Ascending aorta (tissue), 2 donors: ENCODE measurements at regions of chr12 and their contacts with region 1.

Region 1: GRCh38 chr12:88725592-88726143 is 145.4 kb upstream of the KITLG start:
- DNase-seq: no peak
- H3K4me3 ChIP-seq: no peak overlapping the region
- H3K27ac ChIP-seq: no peak overlapping the region
- H3K4me1 ChIP-seq: no peaks in the 10 kb centered on the region
- H3K27me3 ChIP-seq: no peaks in the 10 kb centered on the region
- CTCF ChIP-seq: no peak

Region 2: DNA sequence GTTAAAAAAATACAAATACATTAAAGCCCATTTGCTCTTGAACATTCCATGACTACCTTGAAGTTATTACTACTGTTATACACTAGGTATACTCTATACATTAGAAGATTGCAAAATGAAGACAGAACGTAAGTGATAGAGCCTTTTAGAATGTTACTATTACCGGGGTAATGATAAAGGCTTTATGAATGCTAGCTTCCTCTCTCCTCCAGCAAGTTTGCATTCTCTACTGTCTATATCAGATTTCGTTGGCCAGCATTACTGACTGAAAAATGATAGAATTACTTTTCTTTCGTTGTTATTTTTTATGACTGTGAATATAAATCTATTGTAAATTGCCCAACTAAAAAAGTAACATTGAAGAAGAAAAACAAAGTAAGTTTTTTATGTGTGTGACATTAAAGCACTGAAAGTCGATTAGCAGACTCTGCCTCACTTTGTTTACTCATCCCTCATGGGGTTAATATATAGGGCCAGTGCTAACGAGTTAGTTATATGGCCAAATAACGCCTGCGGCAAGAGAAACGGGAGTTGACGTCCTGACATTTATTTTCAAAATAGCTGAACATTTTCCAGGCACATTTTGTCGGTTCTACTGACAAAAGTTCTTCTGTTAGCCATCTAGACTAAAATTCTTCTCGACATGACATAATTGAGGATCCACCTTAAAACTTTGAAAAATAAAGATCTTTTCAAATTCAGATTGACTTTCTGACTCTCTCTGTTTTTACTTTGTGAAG is 18.4 kb after region 1 on chr12:
- intact Hi-C with region 1: no loop called
- DNase-seq: no peak
- H3K4me3 ChIP-seq: no peak overlapping the region
- H3K27ac ChIP-seq: no peak overlapping the region
- H3K4me1 ChIP-seq: no peaks in the 10 kb centered on the region
- H3K27me3 ChIP-seq: no peaks in the 10 kb centered on the region
- CTCF ChIP-seq: no peak

Region 3: DNA sequence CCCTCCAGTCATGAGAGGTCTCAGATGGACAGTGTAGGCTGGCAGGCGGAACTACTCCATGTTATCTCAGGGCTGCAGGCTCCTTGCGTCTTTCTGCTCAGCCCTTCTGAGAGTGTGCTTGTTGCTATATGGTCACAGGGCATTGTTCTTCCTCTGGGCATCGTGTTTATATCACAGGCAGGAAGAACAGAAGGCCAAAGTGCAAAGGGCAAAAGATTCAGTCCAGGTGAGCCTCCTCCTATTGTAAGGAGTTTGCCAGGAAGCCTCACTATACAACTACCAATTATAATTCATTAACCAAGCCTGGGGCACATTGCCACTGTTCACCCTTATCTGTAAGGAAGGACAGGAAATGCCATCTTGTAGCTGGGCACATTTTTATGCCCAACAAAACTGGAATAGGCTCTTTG is 50.1 kb after region 1 on chr12:
- intact Hi-C with region 1: loop called (anchors 2 kb)
- DNase-seq: no peak
- H3K4me3 ChIP-seq: no peak overlapping the region
- H3K27ac ChIP-seq: no peak overlapping the region
- H3K4me1 ChIP-seq: no peaks in the 10 kb centered on the region
- H3K27me3 ChIP-seq: no peaks in the 10 kb centered on the region
- CTCF ChIP-seq: no peak

Region 4: DNA sequence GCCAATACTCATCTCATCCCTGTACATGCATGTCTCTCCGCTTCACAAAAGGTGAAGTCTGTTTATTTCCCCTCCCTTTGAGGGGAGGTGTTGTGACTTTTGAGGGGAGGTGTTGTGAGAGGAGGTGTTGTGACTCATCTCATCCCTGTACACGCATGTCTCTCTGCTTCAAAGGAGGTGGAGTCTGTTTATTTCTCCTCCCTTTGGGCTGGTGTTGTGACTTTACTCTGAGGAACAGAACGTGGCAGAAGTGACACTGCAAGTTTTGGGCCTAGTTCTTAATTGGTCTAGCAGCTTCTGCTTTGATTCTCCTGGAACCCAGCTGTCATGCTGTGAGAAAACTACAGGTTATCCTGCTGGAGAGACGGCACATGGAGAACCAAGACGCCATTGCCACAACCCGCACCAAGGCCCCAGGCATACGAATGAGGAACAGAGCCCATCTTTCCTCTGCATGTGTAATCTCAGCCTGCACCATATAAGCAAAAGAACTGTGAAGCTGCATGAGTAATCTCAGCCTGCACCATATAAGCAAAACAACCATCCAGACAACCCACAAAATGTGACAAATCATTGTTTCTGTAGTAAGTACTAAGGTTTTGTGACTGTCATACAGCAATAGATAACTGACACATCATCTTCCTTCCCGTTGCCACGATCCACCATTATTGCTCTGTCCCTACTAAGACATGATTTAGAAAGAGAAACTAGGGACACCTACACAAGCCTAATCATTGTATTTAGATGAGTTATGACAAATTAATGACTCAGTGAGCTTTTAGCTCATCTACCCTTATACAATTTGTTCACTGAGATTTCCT is 769.0 kb after region 1 on chr12:
- intact Hi-C with region 1: no loop called
- DNase-seq: no peak
- H3K4me3 ChIP-seq: no peak overlapping the region
- H3K27ac ChIP-seq: no peak overlapping the region
- H3K4me1 ChIP-seq: no peaks in the 10 kb centered on the region
- H3K27me3 ChIP-seq: no peaks in the 10 kb centered on the region
- CTCF ChIP-seq: no peak